GM23248 (cell line): ENCODE measurements at regions of chr4 and their contacts with region 1.

Region 1: GRCh38 chr4:116374815-116375214 is 710.6 kb downstream of the TRAM1L1 start:
- DNase-seq: no peak
- H3K4me3 ChIP-seq: no peak overlapping the region
- H3K27ac ChIP-seq: no peak overlapping the region
- H3K4me1 ChIP-seq: no peaks in the 10 kb centered on the region
- H3K27me3 ChIP-seq: no peaks in the 10 kb centered on the region

Region 2: DNA sequence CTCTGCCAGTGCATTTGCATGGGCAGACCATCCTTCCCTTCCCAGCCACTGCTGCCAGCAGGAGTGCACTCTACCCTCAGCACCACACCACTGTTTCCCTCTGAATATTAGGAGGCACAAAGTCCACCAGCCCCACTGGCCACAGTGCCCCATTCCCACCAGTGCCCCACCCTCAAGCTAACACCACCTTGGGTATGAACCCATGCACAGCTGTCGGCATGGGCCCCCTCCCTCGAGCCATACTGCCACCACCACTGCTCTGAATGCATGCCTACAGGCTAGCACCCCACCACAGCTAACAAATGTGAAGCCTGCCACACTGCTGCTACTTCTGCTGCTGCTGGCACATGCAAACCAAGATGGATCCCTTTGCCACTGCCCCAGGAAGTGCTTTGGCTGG is 99.8 kb before region 1 on chr4:
- in situ Hi-C with region 1: loop called (anchors 25 kb)
- DNase-seq: no peak
- H3K4me3 ChIP-seq: no peak overlapping the region
- H3K27ac ChIP-seq: no peak overlapping the region
- H3K4me1 ChIP-seq: no peaks in the 10 kb centered on the region
- H3K27me3 ChIP-seq: no peaks in the 10 kb centered on the region

Region 3: GRCh38 chr4:117010695-117011094 is 635.9 kb after region 1 on chr4:
- in situ Hi-C with region 1: no loop called
- DNase-seq: no peak
- H3K4me3 ChIP-seq: no peak overlapping the region
- H3K27ac ChIP-seq: no peak overlapping the region
- H3K4me1 ChIP-seq: no peaks in the 10 kb centered on the region
- H3K27me3 ChIP-seq: no peaks in the 10 kb centered on the region

Region 4: DNA sequence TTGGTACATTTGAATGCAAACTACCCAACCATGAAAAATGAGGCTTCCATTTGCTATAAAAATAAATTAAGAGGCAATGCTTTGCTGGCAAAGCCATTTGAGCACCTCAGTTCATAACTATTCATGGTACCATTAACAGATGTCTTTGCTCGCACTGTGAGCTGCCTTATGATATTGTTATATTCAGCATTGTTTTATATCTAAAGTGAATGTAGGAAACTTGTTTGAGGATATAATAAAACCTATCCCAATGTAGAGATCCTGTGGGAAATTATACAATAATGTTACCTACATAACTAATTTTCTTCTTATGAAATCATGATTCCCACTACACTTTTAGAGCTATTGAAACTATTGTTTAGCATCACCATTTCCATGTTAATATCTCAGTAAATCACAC is 835.7 kb after region 1 on chr4:
- in situ Hi-C with region 1: no loop called
- DNase-seq: no peak
- H3K4me3 ChIP-seq: no peak overlapping the region
- H3K27ac ChIP-seq: no peak overlapping the region
- H3K4me1 ChIP-seq: no peaks in the 10 kb centered on the region
- H3K27me3 ChIP-seq: no peaks in the 10 kb centered on the region